A673 (cell line): ENCODE measurements at regions of chr1 and their contacts with region 1.

Region 1: GRCh38 chr1:157490467-157491165 is 61.7 kb downstream of the FCRL5 start:
- DNase-seq: peak; percentile 73
- H3K4me3 ChIP-seq: no peak overlapping the region
- H3K27ac ChIP-seq: no peak overlapping the region
- H3K4me1 ChIP-seq: no peaks in the 10 kb centered on the region
- H3K27me3 ChIP-seq: peaks cover 19% of the 10 kb centered on the region
- CTCF ChIP-seq: peak; percentile 71

Region 2: DNA sequence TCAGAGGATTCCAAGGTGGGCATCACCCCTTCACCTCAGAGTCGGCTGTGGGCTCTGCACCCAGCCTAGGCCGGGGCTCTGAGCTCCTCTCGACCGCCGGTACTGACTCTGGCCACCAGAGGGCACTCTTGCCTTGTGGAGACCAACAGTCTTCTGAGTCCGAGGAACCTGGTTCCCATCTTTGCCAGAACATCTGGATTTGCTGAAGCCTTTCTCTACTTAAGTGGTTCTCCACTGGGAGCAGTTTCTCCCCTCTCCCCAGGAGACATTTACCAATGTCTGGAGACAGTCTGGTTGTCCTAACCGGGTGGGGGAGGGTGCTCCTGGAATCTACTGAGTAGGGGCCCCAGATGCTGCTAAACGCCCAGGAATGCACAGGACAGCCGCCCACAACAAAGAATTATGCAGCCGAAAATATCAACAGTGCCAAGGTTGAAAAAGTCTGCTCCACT is 400.4 kb before region 1 on chr1:
- CTCF ChIA-PET with region 1: no interaction called
- POLR2A ChIA-PET with region 1: no interaction called
- intact Hi-C with region 1: loop called (anchors 2 kb)
- DNase-seq: peak; percentile 95
- H3K4me3 ChIP-seq: no peak overlapping the region
- H3K27ac ChIP-seq: peak overlapping the region; percentile 61
- H3K4me1 ChIP-seq: peaks cover 30% of the 10 kb centered on the region
- H3K27me3 ChIP-seq: no peaks in the 10 kb centered on the region
- CTCF ChIP-seq: peak; percentile 98

Region 3: DNA sequence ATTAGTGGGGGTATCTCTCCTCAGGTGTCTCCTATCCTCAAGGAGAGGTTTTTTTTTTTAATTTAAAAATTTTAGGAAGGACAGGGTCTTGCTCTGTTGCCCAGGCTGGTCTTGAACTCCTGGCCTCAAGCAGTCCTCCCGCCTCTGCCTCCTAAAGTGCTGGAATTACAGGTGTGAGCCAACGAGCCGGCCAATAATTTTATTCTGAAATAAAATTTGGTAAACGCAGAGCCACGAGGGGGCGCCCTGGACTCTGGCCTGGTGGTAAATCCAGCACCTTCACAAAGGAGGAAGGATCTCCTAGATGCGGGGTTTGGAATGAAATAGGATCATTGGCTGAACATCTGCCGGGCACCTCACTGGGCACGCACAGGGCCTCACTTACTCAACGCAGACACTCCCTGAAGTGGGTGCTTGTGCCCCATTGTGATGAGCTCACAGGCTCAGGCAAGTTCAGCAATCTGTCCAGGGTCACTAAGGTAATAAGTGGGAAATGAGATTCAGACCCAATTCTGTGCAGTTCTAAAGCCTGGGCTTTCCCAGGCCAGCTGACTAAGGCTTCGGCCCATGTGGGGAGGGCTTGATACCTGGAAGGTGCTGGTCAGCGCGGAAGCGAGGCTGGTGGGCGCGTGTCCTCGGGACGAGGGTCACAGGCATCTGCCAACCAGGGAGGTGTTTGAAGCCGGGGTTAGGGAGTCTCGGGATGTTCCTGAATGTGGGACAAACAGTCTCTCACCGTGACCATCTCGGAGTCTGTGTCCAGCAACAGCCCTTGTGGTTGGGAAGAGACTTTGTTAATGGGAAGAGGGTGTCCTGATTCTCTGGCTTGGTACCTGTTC is 319.7 kb before region 1 on chr1:
- CTCF ChIA-PET with region 1: no interaction called
- POLR2A ChIA-PET with region 1: no interaction called
- intact Hi-C with region 1: loop called (anchors 5 kb)
- DNase-seq: peak; percentile 73
- H3K4me3 ChIP-seq: no peak overlapping the region
- H3K27ac ChIP-seq: no peak overlapping the region
- H3K4me1 ChIP-seq: no peaks in the 10 kb centered on the region
- H3K27me3 ChIP-seq: no peaks in the 10 kb centered on the region
- CTCF ChIP-seq: peak; percentile 82

Region 4: DNA sequence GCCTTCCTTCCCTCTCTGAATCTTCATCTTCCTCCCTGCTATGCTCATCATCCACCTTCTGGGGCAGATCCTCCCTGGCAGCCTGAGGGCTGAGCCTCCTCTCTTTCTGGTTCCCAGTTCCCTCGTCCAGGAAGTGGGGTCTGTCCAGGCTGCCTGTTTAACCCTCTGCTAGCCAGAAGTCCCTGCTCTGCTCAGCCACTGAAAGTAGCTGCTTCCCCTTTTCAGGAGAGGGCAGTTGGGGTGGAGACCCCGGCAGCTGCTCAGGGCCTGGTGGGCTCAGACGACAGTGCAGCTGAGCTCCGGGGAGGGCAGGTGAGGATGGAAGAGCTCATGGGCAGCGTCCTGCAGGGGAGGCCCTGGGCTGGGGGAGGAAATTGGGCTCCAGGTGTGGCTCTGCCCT is 309.4 kb before region 1 on chr1:
- CTCF ChIA-PET with region 1: interaction called, 12 read pairs
- POLR2A ChIA-PET with region 1: no interaction called
- intact Hi-C with region 1: no loop called
- DNase-seq: no peak
- H3K4me3 ChIP-seq: no peak overlapping the region
- H3K27ac ChIP-seq: no peak overlapping the region
- H3K4me1 ChIP-seq: no peaks in the 10 kb centered on the region
- H3K27me3 ChIP-seq: no peaks in the 10 kb centered on the region
- CTCF ChIP-seq: no peak

Region 5: GRCh38 chr1:157193702-157194391 is 296.8 kb before region 1 on chr1:
- CTCF ChIA-PET with region 1: no interaction called
- POLR2A ChIA-PET with region 1: no interaction called
- intact Hi-C with region 1: loop called (anchors 2 kb)
- DNase-seq: peak; percentile 82
- H3K4me3 ChIP-seq: no peak overlapping the region
- H3K27ac ChIP-seq: no peak overlapping the region
- H3K4me1 ChIP-seq: no peaks in the 10 kb centered on the region
- H3K27me3 ChIP-seq: peaks cover 7% of the 10 kb centered on the region
- CTCF ChIP-seq: peak; percentile 92

Region 6: DNA sequence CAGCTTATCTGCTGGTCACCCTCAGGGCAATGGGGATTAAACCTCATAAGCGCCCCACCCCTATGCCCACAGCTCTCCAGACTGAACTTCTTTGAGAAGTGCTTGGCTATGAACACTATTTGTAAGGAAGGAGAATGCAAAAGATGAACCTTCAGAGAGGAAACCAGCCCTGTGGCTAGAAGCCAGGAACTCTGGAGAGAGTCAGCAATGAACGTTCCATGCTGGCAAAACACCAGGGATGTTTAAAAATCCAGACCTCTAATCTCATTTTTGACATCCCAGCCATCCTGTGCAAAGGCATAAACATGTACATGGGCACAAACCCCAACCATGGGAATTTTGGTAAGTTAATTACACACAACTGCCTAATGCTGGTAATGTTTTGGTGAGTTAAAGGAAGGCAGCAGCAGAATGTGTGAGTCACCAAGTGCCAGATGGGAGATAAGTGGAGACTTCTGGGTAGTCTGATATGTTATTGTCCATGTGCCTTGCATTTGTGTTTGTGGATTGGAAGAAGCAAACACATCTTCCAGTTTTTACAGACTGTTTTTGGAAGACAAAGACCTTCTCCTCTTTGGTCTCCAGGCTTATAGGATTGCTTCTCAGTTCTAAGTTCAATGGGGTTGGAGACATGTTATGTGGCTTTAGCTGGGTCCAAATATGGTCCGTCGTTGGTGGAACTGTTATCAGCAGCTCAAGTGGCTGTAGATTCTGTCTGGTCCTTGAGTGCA is 178.4 kb before region 1 on chr1:
- CTCF ChIA-PET with region 1: no interaction called
- POLR2A ChIA-PET with region 1: no interaction called
- intact Hi-C with region 1: loop called (anchors 5 kb)
- DNase-seq: peak; percentile 3
- H3K4me3 ChIP-seq: no peak overlapping the region
- H3K27ac ChIP-seq: no peak overlapping the region
- H3K4me1 ChIP-seq: no peaks in the 10 kb centered on the region
- H3K27me3 ChIP-seq: peaks cover 42% of the 10 kb centered on the region
- CTCF ChIP-seq: no peak

Region 7: DNA sequence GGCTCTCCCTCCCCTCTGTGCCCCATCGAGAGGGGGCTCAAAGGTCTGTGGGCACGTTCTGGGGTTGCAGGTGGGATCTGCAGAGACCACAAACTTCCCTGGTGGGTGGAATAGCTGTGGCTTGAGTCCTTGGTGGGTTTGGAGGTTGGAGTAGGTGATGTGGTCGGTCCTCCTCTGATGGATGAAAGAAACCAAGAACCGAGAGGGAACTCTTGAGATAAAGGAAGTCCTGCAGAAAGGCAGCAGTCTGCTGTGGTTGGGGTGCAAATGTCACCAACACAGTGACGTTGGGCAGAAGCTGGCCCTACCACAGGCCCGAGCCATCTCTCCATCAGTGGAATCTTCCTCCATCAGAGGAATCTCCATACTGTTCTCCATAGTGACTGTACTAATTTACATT is 110.1 kb before region 1 on chr1:
- CTCF ChIA-PET with region 1: no interaction called
- POLR2A ChIA-PET with region 1: no interaction called
- intact Hi-C with region 1: loop called (anchors 1 kb)
- DNase-seq: no peak
- H3K4me3 ChIP-seq: no peak overlapping the region
- H3K27ac ChIP-seq: no peak overlapping the region
- H3K4me1 ChIP-seq: no peaks in the 10 kb centered on the region
- H3K27me3 ChIP-seq: peaks cover 66% of the 10 kb centered on the region
- CTCF ChIP-seq: no peak

Region 8: DNA sequence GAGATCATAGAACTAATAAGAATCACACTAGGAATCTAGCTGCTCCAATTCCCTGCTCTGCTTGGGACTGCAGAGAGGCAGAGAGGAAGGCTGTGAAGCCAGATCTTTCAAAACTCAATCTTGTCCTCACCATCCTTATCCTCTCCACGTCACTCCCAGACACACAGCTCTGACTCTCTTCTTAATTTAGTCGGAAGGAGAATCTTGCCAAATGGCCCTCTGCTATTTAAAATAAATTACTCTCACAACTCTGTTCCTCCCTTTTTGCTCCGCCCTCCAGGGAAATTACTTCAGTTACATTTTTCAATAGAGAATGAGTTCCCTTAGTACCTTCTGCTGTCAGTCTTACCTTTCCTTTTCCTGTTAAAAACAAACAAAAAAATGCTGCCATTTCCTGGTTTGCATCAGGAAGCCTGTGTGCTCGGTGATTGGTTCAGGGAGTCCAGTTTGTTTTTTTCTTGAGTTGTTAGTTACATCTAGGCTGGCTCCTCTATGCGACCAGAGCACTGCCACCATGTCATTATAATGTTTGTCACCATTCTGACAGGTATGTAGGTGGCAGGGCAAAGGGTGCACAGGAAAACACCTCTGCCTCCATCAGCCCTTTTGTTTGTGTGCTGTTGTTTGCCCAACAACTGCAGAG is 18.4 kb before region 1 on chr1:
- CTCF ChIA-PET with region 1: no interaction called
- POLR2A ChIA-PET with region 1: no interaction called
- intact Hi-C with region 1: no loop called
- DNase-seq: no peak
- H3K4me3 ChIP-seq: no peak overlapping the region
- H3K27ac ChIP-seq: no peak overlapping the region
- H3K4me1 ChIP-seq: no peaks in the 10 kb centered on the region
- H3K27me3 ChIP-seq: peaks cover 31% of the 10 kb centered on the region
- CTCF ChIP-seq: no peak

Region 9: GRCh38 chr1:157766792-157767191 is 276.2 kb after region 1 on chr1:
- CTCF ChIA-PET with region 1: no interaction called
- POLR2A ChIA-PET with region 1: no interaction called
- intact Hi-C with region 1: no loop called
- DNase-seq: no peak
- H3K4me3 ChIP-seq: no peak overlapping the region
- H3K27ac ChIP-seq: no peak overlapping the region
- H3K4me1 ChIP-seq: peaks cover 10% of the 10 kb centered on the region
- H3K27me3 ChIP-seq: no peaks in the 10 kb centered on the region
- CTCF ChIP-seq: no peak